RWPE1 (cell line): ENCODE measurements at regions of chr2 and their contacts with region 1.

Region 1: DNA sequence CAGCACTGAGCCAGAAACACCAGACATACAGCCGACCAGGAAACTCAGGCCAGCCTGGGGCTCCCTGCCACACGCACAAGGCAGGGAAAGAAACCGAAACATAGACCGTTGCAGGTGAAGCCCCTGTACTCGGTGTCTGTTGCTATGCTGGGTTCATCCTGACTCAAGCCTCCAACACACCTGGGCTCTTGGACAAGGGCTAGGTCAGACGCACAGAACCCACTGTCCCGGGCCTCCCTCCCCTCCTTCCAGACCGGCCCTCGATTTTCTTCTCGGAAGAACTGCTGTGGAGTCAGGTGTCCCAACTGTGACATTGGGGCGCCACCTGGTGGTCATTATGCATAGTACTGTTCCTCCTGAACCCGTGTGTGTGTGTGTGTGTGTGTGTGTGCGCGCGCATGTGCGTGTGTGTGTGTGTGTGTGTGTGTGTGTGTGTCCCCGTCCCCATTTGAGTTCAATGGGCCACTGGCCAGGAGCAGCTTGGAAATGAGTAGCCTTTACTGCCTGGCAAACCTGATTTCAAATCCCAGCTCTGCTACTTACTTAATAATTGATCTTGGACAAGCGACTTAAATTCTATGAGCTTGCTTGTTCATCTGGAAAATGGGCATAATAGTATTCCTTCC is 55.4 kb upstream of the GLI2 start:
- DNase-seq: peak; percentile 71
- H3K27ac ChIP-seq: no peak overlapping the region
- CTCF ChIP-seq: peak; percentile 63

Region 2: DNA sequence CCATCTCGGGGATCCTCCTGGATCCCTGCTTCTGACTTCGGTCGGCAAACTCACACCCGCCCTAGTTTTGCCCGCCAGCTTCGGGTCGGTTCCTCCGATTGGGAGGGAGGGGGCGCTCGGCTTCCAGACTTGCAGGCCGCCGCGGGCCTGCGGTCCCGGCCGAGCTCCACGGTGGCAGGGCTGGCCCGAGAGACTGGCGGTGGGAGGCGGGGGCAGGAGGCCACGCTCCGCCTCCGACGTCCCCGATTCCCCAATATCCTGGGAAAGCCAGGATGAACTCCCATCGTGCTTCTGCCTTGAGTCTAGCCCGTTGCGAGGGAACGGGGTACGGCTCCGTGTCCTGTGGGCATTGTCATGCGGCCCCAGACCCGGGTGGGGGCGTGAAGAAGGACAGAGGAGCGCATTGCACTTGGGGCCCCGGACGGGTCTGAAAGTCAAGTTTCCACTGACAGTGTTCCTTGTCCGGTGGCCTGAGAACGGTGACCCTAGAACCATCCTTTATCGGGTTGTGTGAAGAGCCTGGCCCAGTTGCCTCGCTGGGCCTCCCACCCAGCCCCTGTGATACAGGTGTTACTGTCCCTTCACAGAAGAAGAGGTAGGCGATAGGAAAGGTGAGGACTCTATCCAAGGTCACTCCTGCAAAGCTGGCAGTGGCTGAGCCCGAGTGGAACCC is 336.7 kb before region 1 on chr2:
- CTCF ChIA-PET with region 1: interaction called, 36 read pairs
- POLR2A ChIA-PET with region 1: no interaction called
- DNase-seq: peak; percentile 67
- H3K27ac ChIP-seq: no peak overlapping the region
- CTCF ChIP-seq: peak; percentile 75

Region 3: GRCh38 chr2:120907812-120908211 is 227.6 kb after region 1 on chr2:
- CTCF ChIA-PET with region 1: no interaction called
- POLR2A ChIA-PET with region 1: no interaction called
- DNase-seq: no peak
- H3K27ac ChIP-seq: no peak overlapping the region
- CTCF ChIP-seq: no peak